ENCODE measurements at regions of chrX and their contacts with region 1.

Region 1: GRCh38 chrX:133792198-133792953 is 193.0 kb downstream of the GPC3 start:
- DNase-seq: peak; percentile 73
- ATAC-seq: peak; percentile 81

Region 2: DNA sequence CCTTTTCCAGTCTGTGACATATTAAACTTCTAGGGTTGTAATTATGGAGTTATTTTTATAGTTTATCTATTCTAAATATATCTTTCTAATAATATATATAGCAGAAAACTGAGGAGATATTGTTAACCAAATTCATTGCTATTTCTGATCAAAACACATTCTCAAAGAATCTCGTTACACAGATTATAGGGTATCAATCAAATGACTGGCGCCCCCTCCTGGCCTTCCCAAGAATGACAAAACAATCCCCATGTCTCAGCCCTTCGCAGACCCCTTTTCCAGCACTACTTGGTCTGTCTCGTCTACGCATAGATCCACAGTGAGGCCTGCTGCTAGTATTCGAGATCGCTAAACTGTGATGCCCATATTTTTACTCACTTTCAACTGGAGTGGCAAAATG is 16.3 kb before region 1 on chrX:
- intact Hi-C with region 1: no loop called
- DNase-seq: no peak
- ATAC-seq: no peak

Region 3: DNA sequence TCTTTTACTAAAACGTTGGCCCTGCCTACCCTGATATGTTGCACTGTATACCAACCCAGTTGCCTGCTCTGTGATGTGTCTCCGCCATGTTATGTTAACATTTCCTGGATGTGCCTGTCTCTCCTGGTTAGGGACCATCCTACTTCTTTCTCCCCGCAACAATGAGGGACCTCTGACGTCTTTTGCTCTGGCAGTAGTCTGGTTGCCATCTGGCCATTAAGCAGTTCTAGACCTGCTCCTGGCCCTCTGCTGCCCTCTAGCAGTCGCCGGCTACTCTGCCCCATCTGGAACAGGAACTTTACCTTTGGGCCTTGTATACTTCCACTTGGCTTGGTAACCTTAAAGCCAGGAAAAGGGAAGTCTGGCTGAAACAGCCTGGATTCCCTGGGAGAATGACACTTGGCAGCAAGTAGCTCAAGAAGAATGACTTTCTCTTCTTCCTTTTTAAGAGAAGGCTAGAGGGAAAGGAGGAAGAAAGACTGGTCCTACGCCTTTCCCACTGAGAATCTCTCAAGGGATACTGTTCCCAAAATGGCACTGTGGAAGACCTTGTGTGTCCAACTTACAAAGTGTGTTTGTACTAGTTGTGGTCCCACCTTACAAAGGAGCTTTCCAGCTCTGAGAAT is 129.5 kb after region 1 on chrX:
- intact Hi-C with region 1: loop called (anchors 5 kb)
- DNase-seq: no peak
- ATAC-seq: peak; percentile 10

Region 4: DNA sequence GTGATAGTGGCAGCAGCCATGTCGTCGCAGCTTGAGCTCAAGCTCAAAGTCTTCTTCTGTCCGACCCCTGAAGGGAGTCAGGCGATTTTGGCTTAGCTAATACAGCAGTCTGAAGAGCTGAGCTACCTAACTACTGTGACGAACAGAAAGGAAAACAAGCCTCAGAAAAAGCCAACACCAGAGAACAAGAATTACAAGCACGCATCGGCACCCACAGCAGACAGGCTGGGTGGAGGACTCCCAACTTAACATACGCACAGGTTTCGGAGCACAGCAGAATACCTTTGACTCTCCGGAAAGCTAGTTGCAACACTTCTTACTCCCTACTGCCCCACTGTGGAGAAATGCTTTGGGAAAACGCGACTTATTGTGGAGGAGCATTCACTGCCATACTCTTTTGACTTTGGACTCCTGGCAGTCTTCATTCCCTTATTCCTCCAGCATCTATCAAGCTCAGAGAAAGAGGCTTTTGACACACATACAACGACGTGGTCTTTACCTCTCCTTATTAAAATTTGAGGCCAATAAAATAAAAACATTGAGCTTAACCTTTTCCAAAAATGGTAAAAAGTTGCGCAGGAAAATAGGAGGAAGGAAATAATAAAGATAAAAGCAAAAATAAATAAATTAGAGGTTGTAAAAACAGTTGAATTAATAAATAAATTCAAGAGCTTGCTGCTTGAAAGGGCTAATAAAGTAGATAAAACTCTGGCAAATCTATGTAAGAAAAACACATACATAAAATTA is 234.4 kb after region 1 on chrX:
- intact Hi-C with region 1: loop called (anchors 10 kb)
- DNase-seq: no peak
- ATAC-seq: no peak

Region 5: DNA sequence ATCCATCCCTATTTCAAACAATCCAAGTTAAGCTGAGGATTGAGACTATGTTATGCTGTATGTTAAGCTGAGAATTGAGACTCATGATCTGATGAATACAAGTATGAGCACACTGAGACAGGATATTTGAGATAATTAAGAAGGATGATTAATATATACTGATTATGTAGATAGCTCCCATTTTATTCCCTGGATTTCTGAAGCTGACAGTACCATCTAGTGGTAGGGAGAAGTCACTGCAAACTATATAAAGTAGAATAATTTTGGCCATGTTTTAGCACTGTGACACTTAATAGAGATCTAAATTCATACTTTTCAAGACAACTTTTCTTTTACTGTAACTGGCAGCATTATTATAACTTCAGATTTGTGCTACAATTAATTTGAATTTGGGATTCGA is 603.8 kb after region 1 on chrX:
- intact Hi-C with region 1: loop called (anchors 10 kb)
- DNase-seq: no peak
- ATAC-seq: no peak

Measured in Right ventricle myocardium inferior (tissue), 1 donor.